CD14-positive monocyte (primary cell): ENCODE measurements at regions of chr9 and their contacts with region 1.

Region 1: GRCh38 chr9:71768388-71769174 is at the start of gene CEMIP2:
- DNase-seq: peak; percentile 84 to 89 (median 87)
- H3K4me3 ChIP-seq: peak within 1 kb of the TSS; percentile 84 to 96 (median 86)
- H3K4me3 Mint-ChIP-seq: peak within 1 kb of the TSS; percentile 98 to 99
- H3K27ac ChIP-seq: peak within 1 kb of the TSS; percentile 82 to 90
- H3K27ac Mint-ChIP-seq: peak within 1 kb of the TSS; percentile 90 to 97 (median 95)
- H3K4me1 ChIP-seq: peaks cover 49 to 51% of the 10 kb centered on the region in 2 donors
- H3K4me1 Mint-ChIP-seq: peaks cover 53% of the 10 kb centered on the region
- H3K27me3 ChIP-seq: peaks cover 3 to 4% of the 10 kb centered on the region in 2 donors
- H3K27me3 Mint-ChIP-seq: peaks cover 11 to 24% (median 12%) of the 10 kb centered on the region in 3 donors
- CTCF ChIP-seq: peak; percentile 72
- polyA plus RNA-seq, gene CEMIP2: 11.6 to 58.7 (median 21.4) TPM

Region 2: DNA sequence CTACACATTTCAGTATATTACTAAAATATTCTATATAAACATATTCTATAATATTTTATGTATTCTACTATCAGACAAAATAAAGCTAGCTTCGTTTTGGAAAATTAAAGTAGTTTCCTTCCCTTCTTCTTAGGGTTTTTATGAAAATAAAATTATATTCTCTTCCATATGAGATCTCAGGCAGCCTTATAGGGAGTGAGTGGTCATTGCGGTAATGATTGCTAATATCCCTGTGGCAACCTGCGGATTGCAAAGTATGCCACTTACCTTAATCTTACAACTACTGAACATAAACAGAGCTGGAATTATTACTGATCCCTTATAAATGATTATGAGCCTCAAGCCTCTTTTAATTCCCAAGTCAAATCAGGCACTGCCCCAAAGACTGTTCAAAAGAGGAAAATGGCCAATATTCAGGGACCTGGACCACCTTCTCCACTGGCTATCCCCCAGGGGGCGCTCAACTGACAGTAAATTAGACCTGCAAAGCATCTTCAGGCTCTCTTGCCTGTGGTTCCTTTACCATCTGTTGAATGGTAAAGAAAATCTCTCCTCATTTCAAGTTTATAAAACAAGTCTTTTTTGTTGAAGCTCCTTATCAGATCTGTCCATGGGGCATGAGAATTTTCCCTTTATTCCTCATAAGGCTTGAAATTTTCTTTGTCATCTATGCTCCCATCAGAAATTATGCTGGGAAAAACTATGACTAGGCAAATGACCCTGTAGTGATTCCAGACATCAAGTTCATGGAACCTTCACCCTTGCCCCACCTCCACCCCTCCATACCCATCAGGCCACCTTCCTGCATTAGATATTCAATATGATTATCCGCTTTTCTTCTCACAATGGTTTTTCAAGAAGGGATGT is 164.2 kb before region 1 on chr9:
- intact Hi-C with region 1: loop called (anchors 5 kb)
- DNase-seq: peak; percentile 49 to 70 (median 66)
- H3K4me3 ChIP-seq: no peak overlapping the region
- H3K4me3 Mint-ChIP-seq: no peak overlapping the region
- H3K27ac ChIP-seq: no peak overlapping the region
- H3K27ac Mint-ChIP-seq: no peak overlapping the region
- H3K4me1 ChIP-seq: no peaks in the 10 kb centered on the region
- H3K4me1 Mint-ChIP-seq: no peaks in the 10 kb centered on the region
- H3K27me3 ChIP-seq: no peaks in the 10 kb centered on the region
- H3K27me3 Mint-ChIP-seq: no peaks in the 10 kb centered on the region
- CTCF ChIP-seq: peak; percentile 91

Region 3: GRCh38 chr9:71683598-71684235 is 84.9 kb before region 1 on chr9:
- intact Hi-C with region 1: loop called in 1 of 2 experiments (anchors 5 kb)
- DNase-seq: peak; percentile 70 to 82 (median 73)
- H3K4me3 ChIP-seq: no peak overlapping the region
- H3K4me3 Mint-ChIP-seq: no peak overlapping the region
- H3K27ac ChIP-seq: no peak overlapping the region
- H3K27ac Mint-ChIP-seq: peak overlapping the region; percentile 10 to 82 (median 52)
- H3K4me1 ChIP-seq: peaks cover 15 to 18% of the 10 kb centered on the region in 2 donors
- H3K4me1 Mint-ChIP-seq: peaks cover 36% of the 10 kb centered on the region
- H3K27me3 ChIP-seq: no peaks in the 10 kb centered on the region
- H3K27me3 Mint-ChIP-seq: peaks cover 0 to 3% (median 0%) of the 10 kb centered on the region in 3 donors
- CTCF ChIP-seq: peak; percentile 67

Region 4: DNA sequence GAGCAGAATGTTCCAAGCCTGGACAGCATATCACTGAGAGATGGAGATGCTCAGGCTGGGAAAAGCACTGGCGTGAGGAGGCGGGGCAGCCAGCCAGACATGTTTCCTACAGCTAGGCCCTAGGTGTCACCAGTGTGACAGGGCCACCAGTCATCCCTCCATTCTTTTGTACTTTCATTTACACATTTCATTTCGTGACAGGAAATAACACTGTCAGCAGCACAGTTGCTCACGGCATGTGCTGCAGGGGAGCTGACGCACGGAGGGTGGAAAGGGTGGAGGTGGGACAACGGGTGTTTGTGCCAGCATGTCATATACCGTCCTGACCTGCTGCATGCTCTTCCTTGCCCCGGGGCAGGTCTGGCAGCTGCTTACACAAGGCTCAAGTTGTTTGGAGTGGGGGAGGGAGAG is 14.5 kb after region 1 on chr9:
- intact Hi-C with region 1: no loop called
- DNase-seq: no peak
- H3K4me3 ChIP-seq: no peak overlapping the region
- H3K4me3 Mint-ChIP-seq: no peak overlapping the region
- H3K27ac ChIP-seq: no peak overlapping the region
- H3K27ac Mint-ChIP-seq: peak overlapping the region in 2 of 7 donors; percentile 72 to 74
- H3K4me1 ChIP-seq: no peaks in the 10 kb centered on the region
- H3K4me1 Mint-ChIP-seq: no peaks in the 10 kb centered on the region
- H3K27me3 ChIP-seq: no peaks in the 10 kb centered on the region
- H3K27me3 Mint-ChIP-seq: no peaks in the 10 kb centered on the region
- CTCF ChIP-seq: no peak

Region 5: DNA sequence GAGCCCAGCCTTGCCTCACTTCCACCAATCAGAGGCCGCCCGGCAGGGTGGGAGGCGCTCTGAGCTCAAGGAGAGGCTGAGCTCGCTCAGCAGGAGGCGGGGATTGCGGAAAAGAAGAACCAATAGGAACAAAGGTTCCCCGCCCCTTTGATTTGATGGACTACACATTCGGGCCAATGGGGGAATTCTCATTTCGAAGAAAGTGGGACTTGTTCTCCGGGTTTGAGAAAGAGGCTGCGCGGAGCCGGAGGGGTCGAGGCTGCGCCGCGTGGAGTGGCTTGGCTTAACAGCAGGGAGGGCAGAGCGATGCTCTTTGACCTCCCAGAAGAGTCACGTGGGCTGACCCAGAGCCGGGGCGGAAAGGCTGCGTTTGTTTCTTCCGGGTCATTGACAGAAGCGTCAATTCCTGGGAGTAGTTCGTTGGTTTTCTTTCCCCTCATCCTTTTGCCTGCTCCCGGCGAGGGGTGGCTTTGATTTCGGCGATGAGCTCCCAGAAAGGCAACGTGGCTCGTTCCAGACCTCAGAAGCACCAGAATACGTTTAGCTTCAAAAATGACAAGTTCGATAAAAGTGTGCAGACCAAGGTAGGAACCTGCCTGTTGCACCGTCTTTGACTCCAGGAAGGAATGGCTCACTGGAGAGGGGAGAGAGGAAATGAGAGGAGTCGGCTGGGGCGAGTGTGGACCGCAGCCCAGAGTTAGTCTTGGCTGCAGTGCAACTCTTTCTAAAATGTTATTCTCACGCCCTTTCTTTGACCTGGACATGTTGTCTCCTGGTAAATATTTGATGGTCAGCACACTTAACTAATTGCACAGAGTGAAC is 142.9 kb after region 1 on chr9 and contains the start of gene C9orf85:
- intact Hi-C with region 1: loop called in 1 of 2 experiments (anchors 5 kb)
- DNase-seq: peak; percentile 98 to 99 (median 98)
- H3K4me3 ChIP-seq: peak within 1 kb of the TSS; percentile 75 to 89 (median 87)
- H3K4me3 Mint-ChIP-seq: peak within 1 kb of the TSS; percentile 97 to 100
- H3K27ac ChIP-seq: peak within 1 kb of the TSS; percentile 89
- H3K27ac Mint-ChIP-seq: peak within 1 kb of the TSS; percentile 90 to 99 (median 99)
- H3K4me1 ChIP-seq: peaks cover 22 to 40% of the 10 kb centered on the region in 2 donors
- H3K4me1 Mint-ChIP-seq: peaks cover 56% of the 10 kb centered on the region
- H3K27me3 ChIP-seq: no peaks in the 10 kb centered on the region
- H3K27me3 Mint-ChIP-seq: no peaks in the 10 kb centered on the region
- CTCF ChIP-seq: no peak
- polyA plus RNA-seq, gene C9orf85: 4.5 to 6.4 (median 5.4) TPM

Region 6: DNA sequence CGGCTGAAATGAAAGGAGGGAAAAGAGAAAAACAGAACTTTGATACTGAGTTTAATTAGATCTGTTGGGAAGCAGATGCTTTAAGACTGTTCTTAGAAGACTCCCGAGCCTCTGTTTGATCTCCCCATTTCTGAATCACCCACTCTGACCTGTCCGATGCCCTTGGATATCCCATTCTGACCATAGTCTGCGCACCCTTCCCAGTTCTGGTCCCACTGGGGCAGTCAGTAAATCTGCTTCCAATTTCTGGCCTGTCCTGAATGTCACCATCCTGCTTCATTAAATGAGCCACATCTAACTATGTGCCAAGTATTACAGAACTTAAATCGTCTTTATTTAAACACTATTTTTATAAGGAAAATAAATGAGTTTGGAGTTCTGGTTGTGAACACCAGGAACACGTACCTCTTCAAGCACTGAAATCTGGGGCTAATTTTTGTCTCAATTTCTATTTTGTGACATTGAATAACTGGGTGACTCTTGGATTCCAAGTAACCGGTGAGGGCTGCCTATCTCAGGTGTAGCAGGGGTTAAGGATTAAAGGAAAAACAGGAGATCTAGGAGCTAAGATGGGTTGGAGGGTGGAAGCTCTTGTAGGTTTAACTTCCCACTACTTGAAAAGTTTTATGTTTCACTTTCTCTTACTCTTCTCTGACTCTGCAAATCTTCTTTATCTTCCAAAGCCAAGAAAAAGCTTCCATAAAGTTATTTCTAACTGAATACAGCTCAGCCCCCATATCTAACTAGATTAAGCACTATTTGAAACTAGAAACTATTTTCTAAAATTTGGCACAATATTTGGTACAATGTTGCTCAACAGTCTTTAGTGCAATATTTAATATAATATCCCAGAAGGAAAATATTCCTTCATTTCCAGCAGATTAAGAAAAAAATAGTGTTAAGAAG is 1144.1 kb after region 1 on chr9:
- intact Hi-C with region 1: no loop called
- DNase-seq: no peak
- H3K4me3 ChIP-seq: no peak overlapping the region
- H3K4me3 Mint-ChIP-seq: peak overlapping the region in 1 of 2 donors; percentile 6
- H3K27ac ChIP-seq: no peak overlapping the region
- H3K27ac Mint-ChIP-seq: peak overlapping the region in 2 of 7 donors; percentile 10 to 70
- H3K4me1 ChIP-seq: no peaks in the 10 kb centered on the region
- H3K4me1 Mint-ChIP-seq: peaks cover 8% of the 10 kb centered on the region
- H3K27me3 ChIP-seq: no peaks in the 10 kb centered on the region
- H3K27me3 Mint-ChIP-seq: peaks cover 0 to 2% (median 0%) of the 10 kb centered on the region in 3 donors
- CTCF ChIP-seq: no peak